ENCODE measurements at regions of chr6 and their contacts with region 1.

Region 1: DNA sequence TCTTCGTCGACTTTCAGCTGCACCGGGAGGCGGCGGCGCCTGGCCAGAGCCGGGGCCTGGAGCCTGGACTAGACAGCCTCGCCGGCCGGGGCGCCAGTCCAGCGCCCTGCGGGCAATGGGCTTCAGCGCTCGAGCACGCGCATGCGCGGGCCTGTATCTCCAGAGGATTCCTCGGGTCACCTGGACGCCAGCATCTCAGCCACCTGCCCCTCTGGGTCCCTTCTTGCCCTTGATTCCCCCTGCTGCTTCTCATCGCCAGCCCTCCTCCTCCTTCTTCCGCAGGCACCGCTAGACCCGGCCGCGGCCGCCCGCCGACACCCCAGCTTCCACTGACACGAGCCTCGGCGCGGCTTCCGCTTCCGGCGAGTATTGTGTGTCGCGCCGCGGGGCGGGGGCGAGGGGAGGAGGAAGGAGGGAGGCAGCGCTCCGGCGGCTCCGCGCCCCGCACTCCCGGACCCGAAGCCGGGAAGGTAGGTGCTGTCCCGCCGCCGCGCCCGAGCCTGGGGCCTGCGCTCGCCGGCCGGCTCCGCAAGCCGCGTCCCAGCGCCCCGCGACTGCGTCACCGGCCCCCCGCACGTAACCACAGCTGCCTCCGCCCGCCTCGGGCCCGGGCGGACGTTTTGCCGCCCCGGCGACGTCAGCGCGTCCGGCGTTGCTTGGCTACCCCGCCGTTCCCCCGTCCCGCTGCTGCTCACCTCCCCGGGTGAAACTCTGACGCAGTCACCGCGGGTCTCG is at the start of gene TRIM39:
- DNase-seq: peak; percentile 84
- ATAC-seq: peak; percentile 79
- H3K4me3 ChIP-seq: peak within 1 kb of the TSS; percentile 96
- H3K27ac ChIP-seq: peak within 1 kb of the TSS; percentile 96
- H3K4me1 ChIP-seq: peaks cover 5% of the 10 kb centered on the region; the same call in 1 of the 2 replicates
- H3K27me3 ChIP-seq: no peaks in the 10 kb centered on the region
- CTCF ChIP-seq: no peak
- POLR2A ChIP-seq: peak; percentile 83
- RAD21 ChIP-seq: no peak
- total RNA-seq, gene TRIM39: 9.4 and 10.0 TPM in 2 replicates

Region 2: GRCh38 chr6:30259140-30260035 is 67.3 kb before region 1 on chr6:
- CTCF ChIA-PET with region 1: no interaction called
- POLR2A ChIA-PET with region 1: interaction called, 14 read pairs
- dilution Hi-C with region 1: no loop called
- in situ Hi-C with region 1: no loop called
- intact Hi-C with region 1: loop called (anchors 5 kb)
- DNase-seq: peak; percentile 81
- ATAC-seq: peak; percentile 95
- H3K4me3 ChIP-seq: peak overlapping the region; percentile 86
- H3K27ac ChIP-seq: peak overlapping the region; percentile 54
- H3K4me1 ChIP-seq: peaks cover 7% of the 10 kb centered on the region
- H3K27me3 ChIP-seq: peaks cover 5% of the 10 kb centered on the region
- CTCF ChIP-seq: peak; percentile 42
- POLR2A ChIP-seq: peak; percentile 59; the same call in 1 of the 2 replicates
- RAD21 ChIP-seq: peak; percentile 39